Activated CD4-positive, alpha-beta memory T cell treated with anti-CD3 and anti-CD28 coated beads for 36 hours (primary cell): ENCODE measurements at regions of chr12 and their contacts with region 1.

Region 1: GRCh38 chr12:110888256-110888991 is 32.0 kb downstream of the MYL2 start:
- DNase-seq: no peak
- H3K4me3 Mint-ChIP-seq: no peak overlapping the region
- H3K27ac Mint-ChIP-seq: no peak overlapping the region
- H3K4me1 Mint-ChIP-seq: peaks cover 4% of the 10 kb centered on the region
- H3K27me3 Mint-ChIP-seq: peaks cover 5% of the 10 kb centered on the region

Region 2: DNA sequence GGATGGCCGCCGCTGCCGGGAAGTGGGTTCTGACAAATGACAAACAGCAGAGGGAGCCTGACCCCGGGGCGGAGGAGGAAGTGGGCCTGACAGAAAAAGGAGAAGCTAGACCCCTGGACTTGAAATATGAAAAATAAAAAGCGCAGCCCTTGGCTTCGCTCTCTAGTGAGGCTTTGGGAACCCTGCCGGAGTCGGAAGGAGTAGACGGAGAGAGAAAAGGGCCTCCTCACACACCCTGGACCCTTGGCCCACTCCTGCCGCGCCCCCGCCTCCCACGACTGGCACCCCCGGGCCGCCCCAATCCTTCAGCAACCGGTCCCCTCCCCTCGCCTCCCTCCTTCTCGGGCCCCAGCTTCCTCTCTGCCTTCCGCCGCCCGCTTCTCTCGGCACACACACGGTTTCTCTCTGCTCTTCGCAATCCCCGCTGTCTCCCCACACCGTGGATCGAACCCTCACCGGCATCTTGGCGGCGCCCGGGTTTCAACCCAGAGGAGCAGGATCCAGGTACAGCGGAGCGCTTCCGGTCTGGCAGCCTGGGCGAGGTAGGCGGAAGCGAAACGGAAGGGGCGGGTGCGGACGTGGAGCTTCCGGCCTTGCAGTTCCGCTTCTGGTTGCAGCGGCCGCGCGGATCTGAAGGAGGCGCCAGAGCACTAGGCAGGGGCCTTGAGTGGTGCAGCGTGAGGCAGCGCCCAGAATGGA is 438.5 kb before region 1 on chr12 and contains the start of gene ARPC3:
- CTCF ChIA-PET with region 1: interaction called, 18 read pairs
- POLR2A ChIA-PET with region 1: no interaction called
- intact Hi-C with region 1: no loop called
- DNase-seq: peak; percentile 97
- H3K4me3 Mint-ChIP-seq: peak within 1 kb of the TSS; percentile 100
- H3K27ac Mint-ChIP-seq: peak within 1 kb of the TSS; percentile 99
- H3K4me1 Mint-ChIP-seq: peaks cover 35% of the 10 kb centered on the region
- H3K27me3 Mint-ChIP-seq: no peaks in the 10 kb centered on the region
- total RNA-seq, gene ARPC3: 340 to 352 TPM

Region 3: DNA sequence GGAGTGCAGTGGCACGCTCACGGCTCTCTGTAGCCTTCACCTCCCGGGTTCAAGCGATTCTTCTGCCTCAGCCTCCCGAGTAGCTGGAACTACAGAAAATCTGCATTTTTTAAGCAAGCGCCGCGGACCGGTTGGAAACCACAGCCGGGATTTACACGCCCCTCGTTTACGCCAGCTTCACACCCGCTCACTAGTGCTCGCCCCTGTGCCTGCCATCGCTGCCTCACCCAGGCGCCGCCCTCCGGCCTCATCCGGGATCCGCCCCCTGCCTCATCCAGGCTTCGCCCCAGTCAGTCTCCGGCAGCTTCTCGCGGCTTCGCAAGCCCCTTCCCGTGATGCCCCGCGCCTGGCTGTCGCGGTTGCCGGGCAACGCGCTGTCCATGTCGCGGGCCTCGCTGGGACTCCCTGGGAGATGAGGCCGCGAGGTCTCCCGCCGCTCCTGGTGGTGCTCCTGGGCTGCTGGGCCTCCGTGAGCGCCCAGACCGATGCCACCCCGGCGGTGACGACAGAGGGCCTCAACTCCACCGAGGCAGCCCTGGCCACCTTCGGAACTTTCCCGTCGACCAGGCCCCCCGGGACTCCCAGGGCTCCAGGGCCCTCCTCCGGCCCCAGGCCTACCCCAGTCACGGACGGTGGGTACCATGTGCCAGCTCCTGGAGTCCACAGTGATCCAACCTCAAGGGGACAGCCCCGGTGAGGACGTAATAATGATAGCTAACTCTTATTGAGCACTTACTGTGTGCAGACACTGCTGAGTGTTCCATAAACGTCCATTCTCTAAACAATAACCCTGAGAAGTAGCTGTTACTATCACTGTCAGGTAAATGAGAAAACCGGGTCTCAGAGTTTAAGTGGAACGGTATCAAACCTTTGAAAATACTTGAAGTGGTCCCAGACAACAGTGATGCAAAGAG is 274.4 kb before region 1 on chr12 and contains the start of gene TCTN1:
- CTCF ChIA-PET with region 1: interaction called, 13 read pairs
- POLR2A ChIA-PET with region 1: no interaction called
- intact Hi-C with region 1: loop called (anchors 5 kb)
- DNase-seq: peak; percentile 99
- H3K4me3 Mint-ChIP-seq: peak within 1 kb of the TSS; percentile 85
- H3K27ac Mint-ChIP-seq: peak within 1 kb of the TSS; percentile 54
- H3K4me1 Mint-ChIP-seq: peaks cover 9% of the 10 kb centered on the region
- H3K27me3 Mint-ChIP-seq: no peaks in the 10 kb centered on the region
- total RNA-seq, gene TCTN1: 6.4 to 7.6 TPM

Region 4: GRCh38 chr12:110619534-110619953 is 268.9 kb before region 1 on chr12:
- CTCF ChIA-PET with region 1: interaction called, 13 read pairs
- POLR2A ChIA-PET with region 1: no interaction called
- intact Hi-C with region 1: loop called (anchors 5 kb)
- DNase-seq: peak; percentile 69
- H3K4me3 Mint-ChIP-seq: no peak overlapping the region
- H3K27ac Mint-ChIP-seq: peak overlapping the region; percentile 71
- H3K4me1 Mint-ChIP-seq: peaks cover 15% of the 10 kb centered on the region
- H3K27me3 Mint-ChIP-seq: no peaks in the 10 kb centered on the region

Region 5: DNA sequence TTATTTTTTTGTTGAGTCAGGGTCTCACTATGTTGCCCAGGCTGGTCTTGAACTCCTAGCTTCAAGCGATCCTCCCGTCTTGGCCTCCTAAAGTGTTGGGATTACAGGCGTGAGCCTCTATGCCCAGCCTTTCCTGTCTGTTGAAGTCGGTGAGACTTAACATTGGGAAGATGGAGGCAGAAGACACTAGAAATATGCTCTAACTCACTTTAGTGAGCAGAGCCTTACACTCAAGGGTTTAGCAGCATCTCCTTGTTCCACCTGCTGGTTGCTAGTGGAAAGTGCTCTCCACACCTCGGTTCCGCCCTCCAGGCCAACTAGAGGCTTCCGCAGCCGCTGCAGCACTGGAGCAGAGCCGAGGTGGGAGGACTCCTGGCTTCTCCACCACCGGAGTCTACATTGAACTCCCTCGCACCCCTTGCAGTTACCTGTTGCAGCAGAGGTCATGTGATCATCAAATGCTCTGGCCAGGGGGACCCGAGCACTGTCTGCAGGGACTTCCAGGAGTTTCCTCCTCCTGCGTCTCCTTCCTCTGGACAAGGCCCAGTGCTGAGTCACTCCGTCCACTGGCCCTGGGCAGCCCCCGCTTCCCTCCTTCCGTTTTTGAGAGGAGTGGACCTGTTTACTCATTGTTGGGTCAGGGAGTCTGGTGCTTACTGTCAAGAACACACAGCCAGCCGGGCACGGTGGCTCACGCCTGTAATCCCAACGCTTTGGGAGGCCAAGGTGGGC is 190.1 kb before region 1 on chr12:
- CTCF ChIA-PET with region 1: interaction called, 6 read pairs
- POLR2A ChIA-PET with region 1: no interaction called
- intact Hi-C with region 1: loop called (anchors 5 kb)
- DNase-seq: peak; percentile 88
- H3K4me3 Mint-ChIP-seq: no peak overlapping the region
- H3K27ac Mint-ChIP-seq: no peak overlapping the region
- H3K4me1 Mint-ChIP-seq: peaks cover 5% of the 10 kb centered on the region
- H3K27me3 Mint-ChIP-seq: no peaks in the 10 kb centered on the region

Region 6: GRCh38 chr12:110846615-110847566 is 41.5 kb before region 1 on chr12 and contains the start of gene CCDC63:
- CTCF ChIA-PET with region 1: interaction called, 10 read pairs
- POLR2A ChIA-PET with region 1: no interaction called
- intact Hi-C with region 1: no loop called
- DNase-seq: peak; percentile 48
- H3K4me3 Mint-ChIP-seq: peak within 1 kb of the TSS; percentile 65
- H3K27ac Mint-ChIP-seq: no peak within 1 kb of the TSS
- H3K4me1 Mint-ChIP-seq: peaks cover 3% of the 10 kb centered on the region
- H3K27me3 Mint-ChIP-seq: peaks cover 44% of the 10 kb centered on the region
- total RNA-seq, gene CCDC63: not detected

Region 7: GRCh38 chr12:111248236-111249017 is 360.0 kb after region 1 on chr12:
- CTCF ChIA-PET with region 1: no interaction called
- POLR2A ChIA-PET with region 1: no interaction called
- intact Hi-C with region 1: no loop called
- DNase-seq: no peak
- H3K4me3 Mint-ChIP-seq: no peak overlapping the region
- H3K27ac Mint-ChIP-seq: no peak overlapping the region
- H3K4me1 Mint-ChIP-seq: no peaks in the 10 kb centered on the region
- H3K27me3 Mint-ChIP-seq: peaks cover 8% of the 10 kb centered on the region